Breast epithelium (tissue), 4 donors: ENCODE measurements at regions of chr19 and their contacts with region 1.

Region 1: GRCh38 chr19:1672038-1672768 is 19.8 kb upstream of the TCF3 start:
- DNase-seq: no peak
- H3K4me3 ChIP-seq: peak overlapping the region in 2 of 3 donors; percentile 27 to 56
- H3K27ac ChIP-seq: no peak overlapping the region
- H3K4me1 ChIP-seq: peaks cover 0 to 7% of the 10 kb centered on the region in 2 donors
- H3K27me3 ChIP-seq: peaks cover 19 to 89% of the 10 kb centered on the region in 2 donors
- CTCF ChIP-seq: peak in 2 of 3 donors; percentile 66 to 73
- POLR2A ChIP-seq: no peak

Region 2: GRCh38 chr19:1540365-1540925 is 131.8 kb before region 1 on chr19:
- intact Hi-C with region 1: loop called (anchors 10 kb)
- DNase-seq: no peak
- H3K4me3 ChIP-seq: peak overlapping the region in 1 of 3 donors; percentile 8
- H3K27ac ChIP-seq: peak overlapping the region in 1 of 2 donors; percentile 48
- H3K4me1 ChIP-seq: no peaks in the 10 kb centered on the region
- H3K27me3 ChIP-seq: no peaks in the 10 kb centered on the region
- CTCF ChIP-seq: no peak
- POLR2A ChIP-seq: no peak

Region 3: GRCh38 chr19:1652471-1653299 is 19.5 kb before region 1 on chr19 and contains the start of gene TCF3:
- intact Hi-C with region 1: loop called (anchors 2 kb)
- DNase-seq: peak; percentile 98 to 99
- H3K4me3 ChIP-seq: peak within 1 kb of the TSS; percentile 82 to 98 (median 85)
- H3K27ac ChIP-seq: peak within 1 kb of the TSS; percentile 99 to 100
- H3K4me1 ChIP-seq: peaks cover 5% of the 10 kb centered on the region in 2 donors
- H3K27me3 ChIP-seq: no peaks in the 10 kb centered on the region
- CTCF ChIP-seq: peak in 1 of 3 donors; percentile 20
- POLR2A ChIP-seq: no peak
- total RNA-seq, gene TCF3: 38.6 to 45.3 (median 42.3) TPM

Region 4: DNA sequence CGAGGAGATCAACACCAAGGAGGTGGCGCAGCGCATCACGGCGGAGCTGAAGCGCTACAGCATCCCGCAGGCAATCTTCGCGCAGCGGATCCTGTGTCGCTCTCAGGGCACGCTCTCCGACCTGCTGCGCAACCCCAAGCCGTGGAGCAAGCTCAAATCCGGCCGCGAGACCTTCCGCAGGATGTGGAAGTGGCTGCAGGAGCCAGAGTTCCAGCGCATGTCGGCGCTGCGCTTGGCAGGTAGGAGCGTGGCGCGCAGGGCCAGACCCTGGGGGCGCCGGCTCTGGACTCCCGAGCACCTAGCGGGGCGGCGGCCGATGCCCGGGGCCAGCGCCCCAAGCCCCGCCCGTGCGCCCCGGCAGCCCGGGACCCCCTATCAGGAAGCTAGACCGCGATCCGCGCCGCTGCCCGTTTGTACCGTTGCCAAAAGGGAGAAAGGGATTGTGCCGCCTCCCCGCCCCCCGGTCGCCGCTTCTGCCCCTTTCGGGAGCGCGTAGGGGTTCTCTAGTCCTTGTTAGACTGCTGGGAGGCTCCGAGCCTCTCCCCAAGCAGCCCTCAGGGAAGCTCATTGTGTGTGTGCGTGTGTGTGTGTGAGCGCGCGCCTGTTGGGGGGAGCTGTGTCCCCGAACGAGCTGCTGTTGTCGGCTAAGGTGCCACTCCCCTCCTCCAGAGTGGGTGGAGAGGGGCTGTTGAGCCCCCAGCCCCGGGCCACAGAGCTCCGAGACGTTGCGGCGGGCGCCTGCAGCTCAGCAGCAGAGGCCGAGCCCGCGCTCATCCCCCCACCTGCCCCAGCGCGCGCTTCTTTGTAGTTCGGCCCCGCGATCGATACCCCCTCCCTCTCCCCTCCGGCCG is 82.6 kb after region 1 on chr19:
- intact Hi-C with region 1: loop called (anchors 10 kb)
- DNase-seq: no peak
- H3K4me3 ChIP-seq: no peak overlapping the region
- H3K27ac ChIP-seq: no peak overlapping the region
- H3K4me1 ChIP-seq: peaks cover 0 to 10% of the 10 kb centered on the region in 2 donors
- H3K27me3 ChIP-seq: peaks cover 23 to 88% of the 10 kb centered on the region in 2 donors
- CTCF ChIP-seq: no peak
- POLR2A ChIP-seq: no peak